ENCODE measurements at regions of chr6 and their contacts with region 1.

Region 1: DNA sequence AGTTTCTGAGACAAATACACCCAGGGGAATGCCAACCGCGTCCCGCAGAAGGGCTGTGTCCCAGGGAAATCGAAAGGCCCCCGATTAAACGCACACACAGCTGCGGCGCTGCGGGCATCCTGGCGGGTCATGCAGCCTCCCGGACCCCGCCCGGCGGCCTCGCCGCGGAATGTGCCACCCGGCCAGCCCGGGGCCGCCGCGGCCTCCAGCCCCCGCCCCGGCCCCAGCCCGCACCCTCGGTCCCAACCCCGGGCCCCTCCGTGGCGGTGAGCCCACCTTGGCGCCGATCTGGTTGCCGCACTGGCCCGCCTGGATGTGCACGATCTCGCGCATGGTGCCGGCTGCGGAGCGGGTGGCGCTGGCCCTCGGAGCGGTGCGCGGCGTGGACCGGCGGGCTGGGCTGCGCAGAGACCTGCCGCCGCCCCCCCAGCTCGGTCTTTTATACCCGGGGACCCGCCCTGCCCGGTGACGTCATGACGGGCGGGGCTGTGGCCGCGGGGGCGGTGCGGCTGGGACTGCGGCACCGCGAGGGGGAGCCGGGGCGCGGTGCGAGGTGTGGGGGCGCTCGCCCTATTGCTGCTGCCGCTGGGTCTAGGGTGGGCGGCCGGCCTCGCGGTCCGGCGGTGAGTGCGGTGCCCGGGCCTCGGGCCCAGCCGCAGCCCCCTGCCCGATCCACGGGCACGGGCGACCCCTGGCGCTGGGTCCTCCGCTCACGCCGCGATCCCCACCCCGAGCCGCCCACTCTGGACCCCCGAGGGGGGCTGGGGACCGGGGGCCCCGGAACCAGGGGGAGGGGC is at the start of gene TUBB2A:
- DNase-seq: peak; percentile 77 to 94 (median 88)
- ATAC-seq: peak; percentile 61
- H3K4me3 ChIP-seq: peak within 1 kb of the TSS; percentile 65
- H3K4me3 Mint-ChIP-seq: peak within 1 kb of the TSS; percentile 92
- H3K27ac ChIP-seq: peak within 1 kb of the TSS; percentile 73 to 84
- H3K27ac Mint-ChIP-seq: peak within 1 kb of the TSS; percentile 91
- H3K4me1 ChIP-seq: peaks cover 29% of the 10 kb centered on the region
- H3K4me1 Mint-ChIP-seq: peaks cover 36% of the 10 kb centered on the region
- H3K27me3 ChIP-seq: no peaks in the 10 kb centered on the region
- H3K27me3 Mint-ChIP-seq: peaks cover 2% of the 10 kb centered on the region
- CTCF ChIP-seq: peak; percentile 65
- total RNA-seq, gene TUBB2A: 61.4 to 63.9 TPM

Region 2: DNA sequence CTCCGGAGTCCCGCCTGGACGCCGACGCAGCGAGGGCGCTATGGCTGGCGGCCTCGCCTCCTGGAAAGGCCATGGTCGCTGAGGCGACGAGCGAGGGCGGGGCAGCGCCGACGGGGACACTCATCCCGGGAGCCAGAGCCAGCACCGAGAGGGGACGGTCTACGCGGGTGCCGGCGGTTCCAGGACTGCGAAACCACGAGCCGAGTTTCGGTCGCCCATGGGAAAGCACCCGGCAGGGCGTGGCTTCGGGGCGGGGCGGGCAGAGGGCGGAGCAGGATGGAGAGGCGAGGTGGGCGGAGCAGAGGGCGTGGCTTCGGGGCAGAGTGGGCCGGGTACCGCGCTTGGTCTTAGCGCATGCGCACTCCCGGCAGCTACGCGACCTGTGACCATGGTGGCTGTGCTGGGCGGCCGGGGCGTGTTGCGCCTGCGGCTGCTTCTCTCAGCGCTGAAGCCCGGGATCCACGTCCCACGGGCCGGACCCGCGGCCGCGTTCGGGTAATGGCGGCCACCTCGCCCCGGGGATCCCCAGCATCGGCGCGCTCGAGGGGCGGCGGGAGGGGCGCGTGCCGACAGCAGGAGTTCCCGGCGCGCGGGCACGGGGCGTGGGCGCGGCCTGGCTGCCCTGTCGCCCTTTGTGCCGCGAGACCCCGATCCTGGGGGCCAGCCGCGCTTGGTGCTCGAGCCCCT is 38.8 kb before region 1 on chr6 and contains the start of gene BPHL:
- CTCF ChIA-PET with region 1: interaction called, 3 read pairs
- POLR2A ChIA-PET with region 1: no interaction called
- intact Hi-C with region 1: loop called (anchors 1 kb)
- DNase-seq: peak; percentile 97 to 100 (median 99)
- ATAC-seq: peak; percentile 95
- H3K4me3 ChIP-seq: peak within 1 kb of the TSS; percentile 63 to 80
- H3K4me3 Mint-ChIP-seq: peak within 1 kb of the TSS; percentile 92
- H3K27ac ChIP-seq: peak within 1 kb of the TSS; percentile 85 to 90
- H3K27ac Mint-ChIP-seq: peak within 1 kb of the TSS; percentile 96
- H3K4me1 ChIP-seq: peaks cover 12% of the 10 kb centered on the region
- H3K4me1 Mint-ChIP-seq: peaks cover 13% of the 10 kb centered on the region
- H3K27me3 ChIP-seq: no peaks in the 10 kb centered on the region
- H3K27me3 Mint-ChIP-seq: no peaks in the 10 kb centered on the region
- CTCF ChIP-seq: no peak
- total RNA-seq, gene BPHL: 3.7 to 5.5 TPM

Region 3: GRCh38 chr6:3125815-3126214 is 31.5 kb before region 1 on chr6:
- CTCF ChIA-PET with region 1: interaction called, 3 read pairs
- POLR2A ChIA-PET with region 1: interaction called, 3 read pairs
- intact Hi-C with region 1: loop called (anchors 2 kb)
- DNase-seq: no peak
- ATAC-seq: no peak
- H3K4me3 ChIP-seq: no peak overlapping the region
- H3K4me3 Mint-ChIP-seq: no peak overlapping the region
- H3K27ac ChIP-seq: no peak overlapping the region
- H3K27ac Mint-ChIP-seq: no peak overlapping the region
- H3K4me1 ChIP-seq: no peaks in the 10 kb centered on the region
- H3K4me1 Mint-ChIP-seq: peaks cover 4% of the 10 kb centered on the region
- H3K27me3 ChIP-seq: no peaks in the 10 kb centered on the region
- H3K27me3 Mint-ChIP-seq: no peaks in the 10 kb centered on the region
- CTCF ChIP-seq: no peak

Region 4: GRCh38 chr6:3176562-3177355 is 19.4 kb after region 1 on chr6:
- CTCF ChIA-PET with region 1: no interaction called
- POLR2A ChIA-PET with region 1: no interaction called
- intact Hi-C with region 1: loop called in 1 of 2 experiments (anchors 1 kb)
- DNase-seq: peak in 5 of 9 experiments; percentile 11 to 41 (median 35)
- ATAC-seq: peak; percentile 54
- H3K4me3 ChIP-seq: no peak overlapping the region
- H3K4me3 Mint-ChIP-seq: no peak overlapping the region
- H3K27ac ChIP-seq: no peak overlapping the region
- H3K27ac Mint-ChIP-seq: no peak overlapping the region
- H3K4me1 ChIP-seq: no peaks in the 10 kb centered on the region
- H3K4me1 Mint-ChIP-seq: no peaks in the 10 kb centered on the region
- H3K27me3 ChIP-seq: no peaks in the 10 kb centered on the region
- H3K27me3 Mint-ChIP-seq: peaks cover 9% of the 10 kb centered on the region
- CTCF ChIP-seq: no peak

Region 5: DNA sequence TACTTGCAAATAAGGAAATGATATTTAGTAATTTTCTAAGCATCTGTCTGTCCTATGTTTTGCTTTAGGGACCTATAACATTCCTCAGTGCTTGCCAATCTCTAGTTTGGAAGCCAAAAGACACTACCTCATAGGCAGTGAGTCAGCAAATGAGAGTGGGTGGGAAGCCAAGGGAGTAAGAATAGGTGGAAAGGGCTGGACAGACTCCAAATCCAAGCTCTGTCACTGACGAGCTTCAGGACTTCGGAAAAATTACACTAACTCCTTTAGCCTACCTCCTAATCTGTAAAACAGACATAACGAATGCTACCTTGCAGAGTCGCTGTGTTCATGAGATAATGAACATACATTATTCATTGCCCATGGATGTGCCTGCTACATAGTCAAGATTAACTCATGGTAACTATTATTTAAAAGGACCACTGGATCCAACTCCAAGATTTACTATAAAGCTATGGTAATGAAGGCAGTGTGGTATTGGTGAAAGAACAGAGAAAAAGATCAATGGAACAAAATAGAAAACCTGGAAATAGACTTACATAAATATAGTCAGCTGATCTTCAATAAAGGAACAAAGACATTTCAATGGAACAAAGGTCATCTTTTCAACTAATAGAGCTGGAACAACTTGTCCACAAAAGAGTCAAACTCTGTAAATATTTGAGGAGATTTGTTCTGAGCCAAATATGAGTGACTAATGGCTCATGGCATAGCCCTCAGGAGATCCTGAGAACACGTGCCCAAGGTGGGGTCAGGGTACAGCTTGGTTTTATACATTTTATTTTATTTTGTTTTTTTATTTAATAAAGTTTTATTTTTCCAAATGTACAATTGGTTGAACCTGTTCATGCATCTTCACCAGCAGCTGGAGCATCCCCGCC is 756.0 kb after region 1 on chr6:
- CTCF ChIA-PET with region 1: no interaction called
- POLR2A ChIA-PET with region 1: no interaction called
- intact Hi-C with region 1: no loop called
- DNase-seq: peak in 1 of 9 experiments; percentile 17
- ATAC-seq: no peak
- H3K4me3 ChIP-seq: no peak overlapping the region
- H3K4me3 Mint-ChIP-seq: no peak overlapping the region
- H3K27ac ChIP-seq: no peak overlapping the region
- H3K27ac Mint-ChIP-seq: no peak overlapping the region
- H3K4me1 ChIP-seq: peaks cover 27% of the 10 kb centered on the region
- H3K4me1 Mint-ChIP-seq: peaks cover 28% of the 10 kb centered on the region
- H3K27me3 ChIP-seq: peaks cover 3 to 16% of the 10 kb centered on the region in 2 experiments
- H3K27me3 Mint-ChIP-seq: peaks cover 43% of the 10 kb centered on the region
- CTCF ChIP-seq: no peak

Measured in CD8-positive, alpha-beta T cell (primary cell).